Gastrocnemius medialis (tissue), 4 donors: ENCODE measurements at regions of chr20 and their contacts with region 1.

Region 1: DNA sequence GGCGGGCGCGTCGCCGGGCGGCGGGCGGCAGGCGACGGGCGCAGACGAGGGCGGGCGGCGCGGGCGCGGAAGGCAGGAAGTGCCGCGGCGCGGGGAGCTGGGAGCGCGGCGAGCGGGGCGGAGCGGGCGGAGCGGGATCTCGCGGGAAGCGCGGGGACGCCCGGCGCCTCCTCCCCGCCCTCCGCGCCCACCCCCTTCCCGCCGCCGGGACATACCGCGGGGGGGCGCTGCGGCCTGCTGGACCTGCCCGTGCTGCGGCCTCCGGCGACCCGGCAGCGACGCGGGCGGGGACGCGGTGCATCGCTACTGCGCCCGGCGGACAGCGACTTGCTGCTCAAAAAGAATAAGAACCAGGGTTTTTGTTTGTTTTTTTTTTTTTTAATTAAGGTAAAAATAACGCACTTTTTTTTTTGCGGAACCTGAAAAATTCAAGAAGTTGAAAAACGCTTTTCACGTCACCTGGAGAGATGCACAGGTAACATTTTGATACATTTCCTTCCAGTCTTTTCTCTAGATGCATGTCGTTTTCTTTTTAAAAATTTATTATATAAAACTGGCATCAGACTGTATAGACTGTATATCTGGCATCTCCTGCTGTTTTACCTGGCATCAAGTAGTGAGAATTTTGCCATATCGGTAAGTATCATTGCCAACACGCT is at the start of gene CENPB:
- DNase-seq: peak; percentile 76 to 82
- ATAC-seq: peak; percentile 91 to 92
- H3K4me3 ChIP-seq: peak within 1 kb of the TSS; percentile 65 to 68 (median 67)
- H3K27ac ChIP-seq: peak within 1 kb of the TSS; percentile 76 to 85 (median 82)
- H3K4me1 ChIP-seq: peaks cover 28 to 32% of the 10 kb centered on the region in 2 donors
- H3K27me3 ChIP-seq: no peaks in the 10 kb centered on the region
- CTCF ChIP-seq: peak; percentile 59 to 97 (median 66)
- POLR2A ChIP-seq: no peak
- total RNA-seq, gene CENPB: 67.5 to 186 (median 143) TPM

Region 2: GRCh38 chr20:3732327-3733118 is 54.3 kb before region 1 on chr20 and contains the start of gene HSPA12B:
- in situ Hi-C with region 1: no loop called
- intact Hi-C with region 1: no loop called
- DNase-seq: no peak
- ATAC-seq: peak in 1 of 2 donors; percentile 40
- H3K4me3 ChIP-seq: peak within 1 kb of the TSS; percentile 42 to 58 (median 52)
- H3K27ac ChIP-seq: peak within 1 kb of the TSS; percentile 53 to 72 (median 64)
- H3K4me1 ChIP-seq: peaks cover 0 to 6% of the 10 kb centered on the region in 2 donors
- H3K27me3 ChIP-seq: peaks cover 0 to 7% (median 5%) of the 10 kb centered on the region in 3 donors
- CTCF ChIP-seq: no peak
- POLR2A ChIP-seq: no peak
- total RNA-seq, gene HSPA12B: 3.7 to 8.5 (median 5.8) TPM

Region 3: DNA sequence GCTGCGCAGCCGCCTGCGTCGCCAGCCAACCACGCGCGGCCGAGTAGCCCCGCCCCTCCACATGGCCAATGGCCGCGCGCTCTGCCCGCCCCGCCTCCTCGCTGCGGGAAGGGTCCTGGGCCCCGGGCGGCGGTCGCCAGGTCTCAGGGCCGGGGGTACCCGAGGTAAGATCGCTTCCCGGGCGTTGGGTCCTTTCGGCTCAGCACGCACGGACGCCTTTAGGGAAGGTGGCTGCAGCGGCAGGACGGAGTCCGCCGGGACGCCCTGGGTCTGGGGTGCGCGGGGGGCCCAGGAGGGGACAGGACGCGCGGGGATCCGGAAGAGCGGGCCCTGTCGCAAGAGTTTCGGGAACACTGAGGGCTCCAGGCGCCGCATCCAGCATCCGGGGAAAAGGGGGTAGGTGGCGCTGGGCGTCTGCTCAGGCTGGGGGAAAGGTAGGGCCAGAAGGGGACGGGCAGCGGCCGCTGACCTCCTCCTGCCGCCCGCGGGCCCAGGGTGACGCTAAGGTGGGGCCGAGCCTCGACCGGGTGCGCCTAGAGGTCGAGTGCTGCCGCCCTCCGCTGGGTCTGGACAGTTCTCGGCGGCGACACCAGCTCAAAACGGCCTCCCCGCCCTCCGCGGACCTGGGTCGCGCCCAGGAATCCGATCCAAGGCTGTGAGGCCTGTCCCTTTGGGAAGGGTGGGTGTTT is 60.1 kb after region 1 on chr20 and contains the start of gene MAVS:
- in situ Hi-C with region 1: no loop called
- intact Hi-C with region 1: loop called (anchors 2 kb)
- DNase-seq: peak; percentile 79 to 88
- ATAC-seq: peak; percentile 90 to 95
- H3K4me3 ChIP-seq: peak within 1 kb of the TSS; percentile 75 to 98 (median 84)
- H3K27ac ChIP-seq: peak within 1 kb of the TSS; percentile 95 to 98 (median 96)
- H3K4me1 ChIP-seq: peaks cover 9 to 13% of the 10 kb centered on the region in 2 donors
- H3K27me3 ChIP-seq: no peaks in the 10 kb centered on the region
- CTCF ChIP-seq: peak in 1 of 5 experiments; percentile 13
- POLR2A ChIP-seq: peak; percentile 84 to 85
- total RNA-seq, gene MAVS: 37.9 to 64.5 (median 44.4) TPM

Region 4: DNA sequence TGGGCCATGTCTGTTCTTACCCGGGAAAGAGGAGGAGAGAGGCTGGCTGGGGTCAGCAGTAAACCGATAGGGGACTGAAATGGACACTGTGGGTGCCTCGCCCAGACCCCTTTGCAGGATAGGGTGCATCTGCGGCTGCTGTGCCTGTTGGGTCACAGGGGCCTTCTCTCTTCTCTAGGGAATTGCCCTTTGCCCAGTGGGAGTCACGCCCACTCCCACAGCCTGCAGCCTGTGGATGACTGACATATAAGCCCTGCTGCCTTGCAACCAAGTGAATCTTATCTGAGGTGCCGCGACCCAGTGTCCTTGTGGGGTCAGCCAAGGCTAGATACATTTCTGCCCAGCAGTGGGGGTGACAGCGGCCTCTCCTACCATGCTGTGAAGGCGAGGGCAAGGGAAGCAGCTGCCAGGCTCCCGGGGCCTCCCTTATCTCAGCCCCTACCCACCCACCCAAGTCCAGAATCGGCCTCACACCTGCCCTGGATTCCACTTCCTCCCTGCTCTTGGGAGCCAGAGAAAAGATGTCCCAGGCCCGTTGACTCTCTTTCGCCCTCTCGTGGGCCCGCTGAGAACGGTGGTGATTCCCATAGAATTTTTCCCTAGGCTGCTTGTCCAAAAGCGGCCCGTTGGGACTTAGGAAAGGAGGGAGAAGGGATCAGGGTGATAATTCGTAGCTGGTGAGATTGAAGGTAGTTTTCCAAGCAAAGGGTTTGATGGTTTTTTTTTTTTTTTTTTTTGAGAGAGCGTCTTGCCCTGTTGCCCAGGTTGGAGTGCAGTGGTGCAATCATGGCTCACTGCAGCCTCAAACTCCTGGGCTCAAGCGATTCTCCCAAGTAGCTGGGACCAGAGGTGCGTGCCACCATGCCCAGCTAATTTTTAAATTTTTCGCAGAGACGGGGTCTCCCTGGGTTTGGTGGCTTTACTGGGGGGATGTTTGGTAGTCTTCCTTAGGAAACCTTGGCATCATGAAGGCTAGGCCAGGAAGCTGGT is 305.0 kb after region 1 on chr20:
- in situ Hi-C with region 1: no loop called
- intact Hi-C with region 1: loop called (anchors 5 kb)
- DNase-seq: no peak
- ATAC-seq: peak in 1 of 2 donors; percentile 55
- H3K4me3 ChIP-seq: no peak overlapping the region
- H3K27ac ChIP-seq: no peak overlapping the region
- H3K4me1 ChIP-seq: no peaks in the 10 kb centered on the region
- H3K27me3 ChIP-seq: no peaks in the 10 kb centered on the region
- CTCF ChIP-seq: peak in 2 of 5 experiments; percentile 50 to 66
- POLR2A ChIP-seq: no peak